Transverse colon (tissue), 4 donors: ENCODE measurements at regions of chr3 and their contacts with region 1.

Region 1: DNA sequence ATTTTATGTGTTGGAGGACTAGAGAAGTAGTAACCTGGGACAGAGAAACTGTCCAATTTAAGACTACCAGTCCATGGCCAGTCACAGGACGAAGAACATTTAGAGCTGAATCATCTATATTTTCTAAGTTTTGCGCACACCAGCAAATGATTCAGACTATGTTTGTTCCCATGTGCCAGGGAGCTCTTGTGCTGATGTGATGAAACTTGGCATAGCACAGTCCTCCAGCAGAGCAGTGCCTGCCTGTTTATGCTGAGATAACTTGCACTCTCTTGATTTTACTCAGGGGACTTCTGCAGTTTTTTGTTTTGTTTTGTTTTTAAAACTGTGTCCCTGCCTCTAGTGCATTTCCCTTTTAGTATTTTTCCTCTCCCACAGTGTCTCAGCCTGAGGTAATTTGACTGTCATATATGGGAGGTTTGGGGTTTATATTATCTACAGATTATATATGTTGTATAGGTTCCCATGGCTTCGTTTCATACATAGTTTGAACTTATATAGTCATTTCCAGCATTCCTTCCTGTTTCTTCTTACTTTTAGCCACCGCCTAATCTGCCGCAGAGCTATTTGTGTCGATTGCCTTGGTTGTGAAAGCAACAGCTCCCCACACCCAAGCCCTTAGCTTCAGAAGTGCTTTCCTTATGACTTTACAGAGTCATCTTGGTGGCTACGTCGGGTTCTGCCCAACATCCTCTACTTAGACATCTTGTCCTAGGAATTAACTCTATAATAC is 45.5 kb downstream of the PPM1L start:
- DNase-seq: peak; percentile 63
- H3K4me3 ChIP-seq: no peak overlapping the region
- H3K27ac ChIP-seq: peak overlapping the region; percentile 68 to 81 (median 78)
- H3K4me1 ChIP-seq: peaks cover 6 to 40% (median 25%) of the 10 kb centered on the region in 4 donors
- H3K27me3 ChIP-seq: no peaks in the 10 kb centered on the region
- CTCF ChIP-seq: no peak
- EP300 ChIP-seq: no peak
- POLR2A ChIP-seq: no peak

Region 2: DNA sequence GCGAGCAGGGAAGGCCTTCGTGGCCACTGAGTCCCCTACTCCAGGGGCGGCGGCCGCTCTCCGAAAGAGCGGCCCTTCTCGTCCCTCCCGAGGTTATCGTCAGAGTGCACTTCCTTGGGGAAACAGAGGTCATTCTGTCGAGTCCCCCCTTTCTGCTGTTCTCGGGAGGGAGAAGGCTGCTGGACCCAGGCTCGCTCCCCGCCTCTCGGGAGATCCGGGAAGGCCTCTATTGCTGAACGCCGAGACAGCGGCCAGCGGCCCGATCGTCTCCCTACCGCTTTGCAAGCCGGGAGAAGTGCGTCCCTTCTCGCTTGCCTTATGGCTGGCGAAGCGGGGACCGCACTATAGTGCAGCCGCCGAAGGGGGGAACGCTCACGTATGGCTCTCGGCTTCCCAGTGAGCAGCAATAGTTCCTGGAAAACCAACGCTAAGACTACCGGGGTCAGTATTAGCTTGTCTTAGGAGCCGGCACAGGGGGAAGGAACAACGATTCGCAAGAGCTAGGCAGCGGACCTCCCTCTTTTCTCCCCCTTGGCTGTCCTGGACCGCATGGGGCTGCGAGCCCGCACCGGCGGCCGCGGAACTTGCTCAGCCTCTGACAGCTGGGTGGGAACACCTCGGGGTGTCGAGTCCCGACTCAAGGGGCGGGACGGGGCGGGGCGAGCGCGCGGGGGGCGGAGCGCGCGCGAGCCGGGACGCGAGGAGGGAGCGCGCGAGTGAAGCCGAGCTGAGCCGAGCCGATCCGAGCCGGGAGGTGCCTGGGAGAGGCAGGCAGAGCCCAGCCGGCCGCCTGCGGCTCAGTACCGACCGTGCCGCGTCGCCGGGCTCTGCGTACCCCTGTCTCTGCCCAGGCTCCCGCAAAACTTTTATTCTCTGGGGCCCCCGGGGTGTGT is 46.5 kb before region 1 on chr3:
- in situ Hi-C with region 1: no loop called
- intact Hi-C with region 1: loop called (anchors 10 kb)
- DNase-seq: peak; percentile 96
- H3K4me3 ChIP-seq: peak overlapping the region; percentile 83 to 88 (median 84)
- H3K27ac ChIP-seq: peak overlapping the region; percentile 92 to 98 (median 97)
- H3K4me1 ChIP-seq: peaks cover 0 to 41% (median 26%) of the 10 kb centered on the region in 4 donors
- H3K27me3 ChIP-seq: peaks cover 7% of the 10 kb centered on the region
- CTCF ChIP-seq: peak in 1 of 5 experiments; percentile 21
- EP300 ChIP-seq: no peak
- POLR2A ChIP-seq: peak; percentile 82